KBM-7 (cell line): ENCODE measurements at regions of chr4 and their contacts with region 1.

Region 1: DNA sequence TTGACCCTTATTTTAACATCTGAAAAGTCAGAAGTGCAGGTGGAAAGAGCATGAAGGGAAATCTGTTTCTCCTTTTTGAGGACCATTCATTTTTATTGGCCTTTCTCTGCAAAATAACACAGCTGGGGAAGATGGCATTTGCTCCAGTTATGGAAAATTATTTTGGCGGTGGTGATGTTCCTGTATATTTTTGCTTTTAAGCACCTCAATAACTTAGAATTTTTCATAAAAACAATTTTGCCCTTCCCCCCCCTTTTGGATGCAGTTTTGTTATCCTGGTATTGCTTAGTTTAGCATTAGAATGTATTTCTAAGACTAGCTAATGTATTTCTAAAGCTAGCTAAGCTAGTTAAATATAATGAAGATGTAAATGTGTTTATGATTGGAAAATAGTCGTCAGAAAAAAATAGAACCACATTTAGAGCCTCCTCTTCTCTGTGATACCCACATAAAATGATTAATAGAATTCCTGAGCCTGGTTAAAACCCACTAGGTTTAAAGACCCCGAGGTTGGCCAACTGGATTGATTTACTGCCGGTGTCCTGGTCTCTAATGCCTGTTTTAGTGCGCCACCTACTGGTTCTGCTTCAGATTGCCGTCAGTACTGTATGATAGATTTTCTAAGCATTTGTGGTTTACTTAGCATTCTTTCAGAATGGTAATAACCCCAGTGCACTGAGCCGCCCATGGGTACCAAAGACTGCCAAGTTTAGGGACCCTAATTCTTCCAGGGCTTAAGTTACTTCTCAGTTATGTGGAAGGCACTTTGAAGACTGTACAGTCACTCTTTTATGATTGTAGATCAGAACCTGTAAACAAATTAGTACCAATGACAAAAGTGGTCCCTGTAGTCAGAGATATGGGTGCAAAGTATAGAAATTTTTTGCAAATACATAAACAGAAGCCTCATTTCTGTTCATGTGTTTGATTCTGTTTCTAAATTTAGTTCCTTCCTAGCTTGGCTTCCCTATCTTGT is 11.4 kb downstream of the KLF3 start:
- DNase-seq: peak; percentile 88

Region 2: GRCh38 chr4:37826295-37827029 is 849.0 kb before region 1 on chr4 and contains the start of gene PGM2:
- in situ Hi-C with region 1: loop called (anchors 25 kb)
- DNase-seq: peak; percentile 91

Region 3: GRCh38 chr4:38179690-38180377 is 495.6 kb before region 1 on chr4:
- in situ Hi-C with region 1: loop called (anchors 25 kb)
- DNase-seq: peak; percentile 80

Region 4: GRCh38 chr4:38856524-38857337 is 181.3 kb after region 1 on chr4 and contains the start of gene TLR6:
- in situ Hi-C with region 1: no loop called
- DNase-seq: peak; percentile 91